ENCODE measurements at regions of chr13 and their contacts with region 1.

Region 1: GRCh38 chr13:77827332-77827731 is 91.3 kb downstream of the EDNRB start:
- DNase-seq: peak in 1 of 5 donors; percentile 55
- ATAC-seq: no peak
- H3K4me3 ChIP-seq: no peak overlapping the region
- H3K27ac ChIP-seq: no peak overlapping the region
- H3K4me1 ChIP-seq: peaks cover 0 to 11% (median 0%) of the 10 kb centered on the region in 12 donors
- H3K27me3 ChIP-seq: no peaks in the 10 kb centered on the region
- CTCF ChIP-seq: no peak
- POLR2A ChIP-seq: no peak

Region 2: GRCh38 chr13:77697217-77698103 is 129.9 kb before region 1 on chr13 and contains the start of gene SLAIN1:
- intact Hi-C with region 1: no loop called
- DNase-seq: peak; percentile 79 to 89 (median 81)
- ATAC-seq: peak; percentile 94 to 97 (median 96)
- H3K4me3 ChIP-seq: peak within 1 kb of the TSS; percentile 62 to 96 (median 74)
- H3K27ac ChIP-seq: peak within 1 kb of the TSS in 7 of 12 donors; percentile 9 to 70 (median 47)
- H3K4me1 ChIP-seq: peaks cover 0 to 28% (median 5%) of the 10 kb centered on the region in 12 donors
- H3K27me3 ChIP-seq: peaks cover 0 to 4% (median 0%) of the 10 kb centered on the region in 9 donors
- CTCF ChIP-seq: no peak
- POLR2A ChIP-seq: no peak
- total RNA-seq, gene SLAIN1: 5.1 to 14.9 (median 7.2) TPM

Region 3: GRCh38 chr13:77876176-77876575 is 48.8 kb after region 1 on chr13:
- intact Hi-C with region 1: loop called in 1 of 10 experiments (anchors 5 kb)
- DNase-seq: no peak
- ATAC-seq: no peak
- H3K4me3 ChIP-seq: no peak overlapping the region
- H3K27ac ChIP-seq: no peak overlapping the region
- H3K4me1 ChIP-seq: no peaks in the 10 kb centered on the region
- H3K27me3 ChIP-seq: no peaks in the 10 kb centered on the region
- CTCF ChIP-seq: no peak
- POLR2A ChIP-seq: no peak